Pancreas (tissue), 10 donors: ENCODE measurements at regions of chrX and their contacts with region 1.

Region 1: DNA sequence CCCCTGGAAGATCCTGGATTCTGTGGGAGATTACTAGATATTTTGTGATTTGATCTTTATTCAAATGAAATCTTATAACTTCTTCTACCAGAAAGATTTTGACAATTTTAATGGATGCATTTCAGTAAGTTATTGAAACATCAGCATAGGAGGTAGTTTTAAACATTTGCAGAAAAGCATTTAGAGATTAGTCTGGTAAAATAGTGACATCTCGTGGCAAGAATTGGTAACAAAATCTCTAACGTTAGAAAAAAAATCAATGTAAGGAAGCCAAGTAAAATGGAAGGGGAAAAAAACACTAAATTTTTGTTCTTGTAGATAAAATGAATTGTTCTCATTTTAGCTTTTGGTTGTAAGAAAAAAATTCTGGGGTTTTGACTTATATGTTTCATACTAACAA is 73.3 kb downstream of the TASL start:
- DNase-seq: no peak
- ATAC-seq: peak in 1 of 4 donors; percentile 50
- H3K4me3 ChIP-seq: no peak overlapping the region
- H3K27ac ChIP-seq: no peak overlapping the region
- H3K4me1 ChIP-seq: no peaks in the 10 kb centered on the region
- H3K27me3 ChIP-seq: peaks cover 0 to 17% (median 3%) of the 10 kb centered on the region in 4 donors
- CTCF ChIP-seq: peak in 2 of 4 donors; percentile 41 to 45

Region 2: DNA sequence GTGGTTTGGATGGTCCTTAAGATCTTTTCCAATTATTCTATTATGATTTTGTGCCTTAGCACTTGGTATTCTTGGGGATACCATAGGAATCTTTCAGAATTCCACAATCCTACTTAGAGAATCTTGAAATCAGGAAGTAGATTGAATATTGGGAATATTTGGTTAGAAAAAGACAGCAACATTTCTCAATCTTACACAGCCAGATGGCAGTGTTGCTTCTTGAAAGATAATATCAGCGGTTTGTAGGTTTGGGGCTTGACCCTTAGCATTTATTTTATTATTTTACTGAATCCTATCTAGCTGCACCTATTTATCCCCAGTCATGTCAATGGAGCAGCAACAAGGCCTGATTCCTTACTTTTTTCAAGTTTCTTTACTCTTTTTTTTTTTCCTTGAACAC is 228.8 kb before region 1 on chrX:
- intact Hi-C with region 1: loop called in 1 of 3 experiments (anchors 10 kb)
- DNase-seq: no peak
- ATAC-seq: no peak
- H3K4me3 ChIP-seq: no peak overlapping the region
- H3K27ac ChIP-seq: no peak overlapping the region
- H3K4me1 ChIP-seq: no peaks in the 10 kb centered on the region
- H3K27me3 ChIP-seq: peaks cover 0 to 26% (median 1%) of the 10 kb centered on the region in 4 donors
- CTCF ChIP-seq: peak in 1 of 4 donors; percentile 7